ENCODE measurements at regions of chr17 and their contacts with region 1.

Region 1: GRCh38 chr17:7296189-7296902 is 1.9 kb upstream of the YBX2 start:
- DNase-seq: peak; percentile 74
- H3K4me3 ChIP-seq: no peak overlapping the region
- H3K27ac ChIP-seq: no peak overlapping the region
- H3K4me1 ChIP-seq: peaks cover 8% of the 10 kb centered on the region
- H3K27me3 ChIP-seq: peaks cover 16 to 26% of the 10 kb centered on the region in 2 experiments
- CTCF ChIP-seq: peak; percentile 88 to 97
- POLR2A ChIP-seq: no peak

Region 2: DNA sequence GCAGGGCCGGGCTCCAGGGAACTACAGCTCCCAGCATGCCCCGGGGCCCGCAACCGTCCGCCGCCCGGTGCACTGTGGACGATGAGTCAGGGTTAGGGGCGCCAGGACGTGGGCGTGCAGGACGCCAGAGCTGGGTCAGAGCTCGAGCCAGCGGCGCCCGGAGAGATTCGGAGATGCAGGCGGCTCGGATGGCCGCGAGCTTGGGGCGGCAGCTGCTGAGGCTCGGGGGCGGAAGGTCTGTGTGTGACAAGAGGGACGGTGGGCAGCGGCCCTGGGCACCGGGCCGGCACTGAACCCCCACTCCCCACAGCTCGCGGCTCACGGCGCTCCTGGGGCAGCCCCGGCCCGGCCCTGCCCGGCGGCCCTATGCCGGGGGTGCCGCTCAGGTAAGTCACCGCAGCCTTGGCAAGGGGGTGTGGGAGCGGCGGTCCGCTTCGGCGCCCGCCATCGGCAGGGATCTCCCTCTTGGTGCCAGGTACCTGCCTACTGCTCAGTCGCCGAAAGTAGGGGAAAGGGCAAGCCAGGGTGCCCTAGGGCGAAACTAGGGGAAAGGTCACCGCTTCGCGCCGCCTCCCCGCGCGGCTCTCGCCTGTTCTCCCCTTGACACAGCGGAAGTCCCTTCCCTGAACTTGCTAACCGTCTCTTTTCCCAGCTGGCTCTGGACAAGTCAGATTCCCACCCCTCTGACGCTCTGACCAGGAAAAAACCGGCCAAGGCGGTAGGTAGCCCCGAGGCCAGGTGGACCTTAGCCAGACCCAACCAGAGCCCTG is 76.3 kb before region 1 on chr17 and contains the starts of genes ACADVL and DLG4:
- CTCF ChIA-PET with region 1: interaction called, 94 read pairs
- POLR2A ChIA-PET with region 1: no interaction called
- dilution Hi-C with region 1: no loop called
- intact Hi-C with region 1: loop called (anchors 1 kb)
- DNase-seq: peak; percentile 85
- H3K4me3 ChIP-seq: peak within 1 kb of the TSS; percentile 51 to 69 (median 61)
- H3K27ac ChIP-seq: peak within 1 kb of the TSS; percentile 71
- H3K4me1 ChIP-seq: peaks cover 29% of the 10 kb centered on the region
- H3K27me3 ChIP-seq: no peaks in the 10 kb centered on the region
- CTCF ChIP-seq: no peak
- POLR2A ChIP-seq: peak; percentile 83
- total RNA-seq, gene ACADVL: 300 and 308 TPM in 2 replicates
- total RNA-seq, gene DLG4: 26.6 and 34.6 TPM in 2 replicates

Region 3: GRCh38 chr17:7252176-7253043 is 43.9 kb before region 1 on chr17 and contains the start of gene ELP5:
- CTCF ChIA-PET with region 1: interaction called, 7 read pairs
- POLR2A ChIA-PET with region 1: no interaction called
- dilution Hi-C with region 1: no loop called
- intact Hi-C with region 1: loop called (anchors 1 kb)
- DNase-seq: peak; percentile 99
- H3K4me3 ChIP-seq: peak within 1 kb of the TSS; percentile 57 to 87 (median 83)
- H3K27ac ChIP-seq: peak within 1 kb of the TSS; percentile 95
- H3K4me1 ChIP-seq: peaks cover 23% of the 10 kb centered on the region
- H3K27me3 ChIP-seq: no peaks in the 10 kb centered on the region
- CTCF ChIP-seq: peak in 1 of 2 donors; percentile 10
- POLR2A ChIP-seq: peak; percentile 49
- total RNA-seq, gene ELP5: 41.6 and 44.4 TPM in 2 replicates

Region 4: DNA sequence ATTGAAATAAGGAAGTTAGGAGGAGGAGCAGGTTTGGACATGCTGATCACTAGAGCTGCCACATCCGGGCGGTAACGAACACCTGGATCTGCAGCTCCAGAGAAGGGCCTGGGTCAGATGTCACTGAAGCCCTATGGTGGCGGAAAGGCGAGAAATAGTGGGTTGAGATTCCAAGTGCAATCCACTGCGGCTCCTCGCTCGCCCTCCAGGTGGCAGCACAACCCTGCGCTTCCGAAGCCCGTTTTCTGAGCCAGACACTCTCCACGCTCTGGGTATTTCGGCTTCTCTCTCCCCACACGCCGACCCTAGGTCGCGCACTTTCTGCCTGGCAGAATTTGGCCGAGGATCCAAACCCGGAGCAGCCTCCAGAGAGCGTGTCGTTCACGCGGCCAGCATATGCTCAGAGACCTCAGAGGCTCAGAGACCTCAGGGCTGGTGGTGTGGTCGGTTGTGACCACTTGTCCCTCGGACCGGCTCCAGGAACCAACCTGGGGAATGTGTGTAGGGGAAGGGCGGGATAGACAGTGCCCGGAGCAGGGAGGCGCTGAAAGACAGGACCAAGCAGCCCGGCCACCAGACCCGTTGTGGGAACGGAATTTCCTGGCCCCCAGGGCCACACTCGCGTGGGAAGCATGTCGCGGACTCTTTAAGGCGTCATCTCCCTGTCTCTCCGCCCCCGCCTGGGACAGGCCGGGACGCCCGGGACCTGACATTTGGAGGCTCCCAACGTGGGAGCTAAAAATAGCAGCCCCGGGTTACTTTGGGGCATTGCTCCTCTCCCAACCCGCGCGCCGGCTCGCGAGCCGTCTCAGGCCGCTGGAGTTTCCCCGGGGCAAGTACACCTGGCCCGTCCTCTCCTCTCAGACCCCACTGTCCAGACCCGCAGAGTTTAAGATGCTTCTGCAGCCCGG is 15.6 kb before region 1 on chr17:
- CTCF ChIA-PET with region 1: interaction called, 170 read pairs
- POLR2A ChIA-PET with region 1: no interaction called
- dilution Hi-C with region 1: no loop called
- intact Hi-C with region 1: loop called (anchors 1 kb)
- DNase-seq: peak; percentile 77
- H3K4me3 ChIP-seq: peak overlapping the region in 2 of 3 experiments; percentile 13 to 33
- H3K27ac ChIP-seq: no peak overlapping the region
- H3K4me1 ChIP-seq: peaks cover 9% of the 10 kb centered on the region
- H3K27me3 ChIP-seq: peaks cover 4 to 5% of the 10 kb centered on the region in 2 experiments
- CTCF ChIP-seq: peak; percentile 92 to 96
- POLR2A ChIP-seq: no peak

Region 5: GRCh38 chr17:7344399-7344798 is 48.1 kb after region 1 on chr17:
- CTCF ChIA-PET with region 1: interaction called, 14 read pairs
- POLR2A ChIA-PET with region 1: no interaction called
- dilution Hi-C with region 1: no loop called
- intact Hi-C with region 1: no loop called
- DNase-seq: no peak
- H3K4me3 ChIP-seq: no peak overlapping the region
- H3K27ac ChIP-seq: no peak overlapping the region
- H3K4me1 ChIP-seq: no peaks in the 10 kb centered on the region
- H3K27me3 ChIP-seq: no peaks in the 10 kb centered on the region
- CTCF ChIP-seq: no peak
- POLR2A ChIP-seq: no peak

Measured in endothelial cell of umbilical vein (primary cell).